GM10248 (cell line): ENCODE measurements at regions of chr13 and their contacts with region 1.

Region 1: DNA sequence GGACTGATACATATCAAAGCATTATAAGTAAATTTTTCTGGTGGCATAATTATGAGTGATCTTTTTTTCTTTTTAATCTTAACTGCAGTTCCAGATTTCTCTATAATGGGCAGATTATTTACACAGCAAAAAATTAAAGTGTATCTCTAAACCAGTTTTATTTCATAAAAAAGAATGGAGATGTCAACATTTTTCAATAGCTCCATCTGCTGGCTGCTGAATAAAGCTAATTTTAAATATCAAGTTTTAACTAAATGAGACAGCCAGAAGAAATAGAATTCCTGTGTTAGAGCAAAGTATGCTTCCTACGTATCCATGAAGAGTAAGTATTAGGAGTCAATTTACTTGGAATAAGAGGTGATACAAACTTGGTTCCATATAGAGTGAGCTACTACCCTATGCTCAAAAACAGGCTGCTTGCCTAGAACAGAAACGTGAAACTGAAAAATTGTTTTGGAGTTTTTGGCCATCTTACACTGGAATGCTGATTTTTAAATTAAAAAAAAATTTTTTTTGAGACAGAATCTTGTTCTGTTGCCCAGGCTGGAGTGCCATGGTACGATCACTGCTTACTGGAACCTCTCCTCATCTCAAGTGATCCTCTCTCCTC is 5.0 kb upstream of the PDS5B start:
- DNase-seq: peak; percentile 29
- CTCF ChIP-seq: peak; percentile 37

Region 2: GRCh38 chr13:32548837-32549236 is 32.4 kb before region 1 on chr13:
- CTCF ChIA-PET with region 1: interaction called, 10 read pairs
- POLR2A ChIA-PET with region 1: no interaction called
- DNase-seq: no peak
- CTCF ChIP-seq: no peak